ENCODE measurements at regions of chr2 and their contacts with region 1.

Region 1: DNA sequence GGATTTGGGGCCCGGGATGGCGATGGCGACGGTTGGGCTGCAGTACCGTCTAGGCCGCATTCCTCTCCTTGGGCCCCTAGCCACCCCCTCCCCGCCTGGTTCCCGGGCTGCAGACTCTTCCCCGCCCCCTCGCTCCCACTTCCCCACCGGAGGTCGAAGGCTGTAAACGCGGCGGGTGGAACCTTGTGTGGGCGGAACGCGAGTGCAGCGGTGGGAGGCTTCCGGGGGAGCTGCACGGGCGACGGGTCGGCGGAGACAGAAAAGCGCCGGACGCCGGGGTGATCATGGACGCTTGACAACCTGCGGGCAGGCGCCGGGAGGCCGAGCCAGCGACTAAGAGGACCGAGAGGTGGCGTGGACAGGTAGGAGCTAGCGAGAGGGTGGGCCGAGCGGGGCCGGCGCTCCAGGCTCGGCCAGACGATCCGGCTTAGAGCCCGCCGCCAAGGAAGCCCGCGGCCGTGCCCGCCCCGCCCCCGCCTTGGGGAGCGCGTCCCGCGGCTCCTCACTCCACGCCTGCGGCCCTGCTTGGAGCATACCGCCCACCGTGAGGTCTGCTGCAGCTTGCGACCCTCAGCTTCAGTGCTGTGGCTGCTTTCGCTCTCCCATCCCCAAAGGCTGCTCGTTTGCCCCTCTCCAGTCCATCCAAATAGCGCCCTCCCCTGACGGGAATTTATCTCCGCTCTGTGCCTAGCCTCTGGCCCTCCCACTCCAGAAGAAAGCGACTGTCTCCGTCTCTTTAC is at the start of gene COPS7B:
- DNase-seq: peak; percentile 76
- H3K4me3 Mint-ChIP-seq: peak within 1 kb of the TSS; percentile 94
- H3K27ac Mint-ChIP-seq: peak within 1 kb of the TSS; percentile 88
- H3K4me1 Mint-ChIP-seq: peaks cover 50% of the 10 kb centered on the region
- H3K27me3 Mint-ChIP-seq: no peaks in the 10 kb centered on the region
- total RNA-seq, gene COPS7B: 61.1 and 62.9 TPM in 2 replicates

Region 2: DNA sequence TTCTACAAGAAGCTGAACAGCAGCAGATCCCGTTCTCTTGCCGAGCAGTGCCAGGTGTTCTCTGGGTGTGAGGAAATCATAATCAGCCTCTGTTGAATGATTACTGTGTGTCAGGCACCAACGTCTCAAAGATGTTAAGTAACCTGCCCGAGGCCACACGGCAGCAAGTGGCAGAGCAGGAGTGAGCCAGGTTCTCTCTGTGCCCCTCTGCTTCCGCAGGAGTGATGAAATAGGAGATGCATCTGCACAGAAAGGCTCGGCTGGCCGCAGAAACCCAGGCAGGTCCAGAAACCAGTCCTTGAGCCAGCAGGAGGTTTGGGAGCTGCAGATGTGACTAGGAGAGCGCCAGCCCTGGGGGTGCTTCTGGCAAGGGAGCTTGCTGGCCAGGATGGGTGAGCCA is 68.3 kb after region 1 on chr2:
- intact Hi-C with region 1: no loop called
- DNase-seq: no peak
- H3K4me3 Mint-ChIP-seq: no peak overlapping the region
- H3K27ac Mint-ChIP-seq: no peak overlapping the region
- H3K4me1 Mint-ChIP-seq: no peaks in the 10 kb centered on the region
- H3K27me3 Mint-ChIP-seq: peaks cover 1% of the 10 kb centered on the region

Region 3: GRCh38 chr2:232365621-232366321 is 579.4 kb after region 1 on chr2:
- intact Hi-C with region 1: no loop called
- DNase-seq: no peak
- H3K4me3 Mint-ChIP-seq: no peak overlapping the region
- H3K27ac Mint-ChIP-seq: no peak overlapping the region
- H3K4me1 Mint-ChIP-seq: peaks cover 19% of the 10 kb centered on the region
- H3K27me3 Mint-ChIP-seq: no peaks in the 10 kb centered on the region

Region 4: GRCh38 chr2:232550354-232551249 is 764.3 kb after region 1 on chr2 and contains the starts of genes EIF4E2 and TIGD1:
- intact Hi-C with region 1: loop called (anchors 5 kb)
- DNase-seq: peak; percentile 90
- H3K4me3 Mint-ChIP-seq: peak within 1 kb of the TSS; percentile 100
- H3K27ac Mint-ChIP-seq: peak within 1 kb of the TSS; percentile 100
- H3K4me1 Mint-ChIP-seq: peaks cover 76% of the 10 kb centered on the region
- H3K27me3 Mint-ChIP-seq: no peaks in the 10 kb centered on the region
- total RNA-seq, gene EIF4E2: 94.3 and 96.2 TPM in 2 replicates
- total RNA-seq, gene TIGD1: 8.4 and 8.9 TPM in 2 replicates

Measured in activated T-helper 1 cell treated with anti-CD3 and anti-CD28 coated beads, Interleukin-12 subunit alpha, Interleukin-12 subunit beta, Interleukin-2, Interleukin-4 antibody, amounts not matched to agents 30 ng/mL and 10 ng/mL and 1 ng/mL, durations not matched to agents 14 hours and 24 hours and 36 hours (primary cell).